GM10248 (cell line): ENCODE measurements at regions of chr7 and their contacts with region 1.

Region 1: GRCh38 chr7:100190048-100190711 is 12.5 kb downstream of the STAG3 start:
- DNase-seq: peak; percentile 39
- CTCF ChIP-seq: peak; percentile 48

Region 2: GRCh38 chr7:99827040-99827778 is 363.0 kb before region 1 on chr7:
- CTCF ChIA-PET with region 1: no interaction called
- POLR2A ChIA-PET with region 1: no interaction called
- DNase-seq: no peak
- CTCF ChIP-seq: no peak

Region 3: DNA sequence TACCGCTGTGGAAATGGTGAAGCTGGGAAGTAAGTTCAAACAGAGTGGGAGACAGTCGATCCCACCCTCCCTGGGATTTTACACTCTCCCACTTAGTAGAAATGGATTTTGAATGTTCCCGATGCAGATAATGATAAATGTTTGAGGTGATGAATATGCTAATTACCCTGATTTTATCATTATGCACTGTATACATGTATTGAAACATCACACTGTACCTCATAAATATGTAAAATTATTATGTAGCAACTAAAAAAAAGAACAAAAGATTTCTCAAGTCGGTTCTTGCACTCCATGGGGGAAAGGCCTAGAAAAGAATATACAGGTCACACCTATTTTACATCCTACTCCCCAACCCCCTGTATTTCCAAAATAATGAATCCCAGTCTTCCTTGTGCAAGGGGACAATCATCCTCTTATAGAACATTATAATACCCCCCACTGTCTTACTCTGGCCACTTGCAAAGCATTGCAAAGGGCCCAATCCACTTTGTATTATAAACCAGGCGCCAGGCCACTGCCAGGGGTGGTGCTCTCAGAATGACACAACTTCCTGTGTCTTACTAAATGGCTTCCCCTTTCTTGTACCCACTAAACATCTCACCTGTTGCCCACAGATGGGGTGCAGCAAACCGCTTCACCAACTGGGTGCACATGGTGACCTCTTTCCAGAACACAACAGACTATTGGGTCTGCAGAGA is 292.7 kb before region 1 on chr7:
- CTCF ChIA-PET with region 1: no interaction called
- POLR2A ChIA-PET with region 1: no interaction called
- DNase-seq: no peak
- CTCF ChIP-seq: no peak

Region 4: GRCh38 chr7:100177045-100178001 is 12.9 kb before region 1 on chr7 and contains the starts of genes GPC2 and STAG3:
- CTCF ChIA-PET with region 1: interaction called, 25 read pairs
- POLR2A ChIA-PET with region 1: no interaction called
- DNase-seq: peak; percentile 97
- CTCF ChIP-seq: no peak

Region 5: GRCh38 chr7:100200693-100201092 is 10.5 kb after region 1 on chr7:
- CTCF ChIA-PET with region 1: interaction called, 32 read pairs
- POLR2A ChIA-PET with region 1: no interaction called
- DNase-seq: no peak
- CTCF ChIP-seq: no peak

Region 6: DNA sequence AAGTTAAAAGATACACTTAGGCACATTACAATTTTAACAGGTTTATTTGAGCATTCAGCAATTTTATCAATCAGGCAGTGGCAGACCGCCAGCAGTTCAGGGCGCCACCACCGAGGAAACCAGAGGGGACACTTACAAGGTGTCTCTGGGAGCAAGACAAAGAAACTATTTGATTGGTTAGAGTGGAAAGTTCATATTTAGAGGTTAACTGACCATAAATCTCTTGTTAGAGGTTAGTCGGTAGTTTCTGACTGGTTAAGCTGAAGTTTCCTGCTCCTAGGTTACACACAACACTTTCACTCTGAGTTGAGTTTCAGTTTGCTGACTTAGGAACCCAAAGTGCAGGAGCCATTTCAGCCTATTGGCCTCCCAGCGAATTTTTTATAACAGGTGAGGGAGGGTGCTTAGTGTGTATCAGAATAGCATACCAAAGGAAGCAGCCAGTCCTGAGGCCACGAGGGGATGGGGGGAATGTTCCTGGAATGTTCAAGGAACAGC is 18.8 kb after region 1 on chr7:
- CTCF ChIA-PET with region 1: interaction called, 130 read pairs
- POLR2A ChIA-PET with region 1: no interaction called
- DNase-seq: peak; percentile 75
- CTCF ChIP-seq: no peak

Region 7: GRCh38 chr7:100215895-100216294 is 25.7 kb after region 1 on chr7:
- CTCF ChIA-PET with region 1: interaction called, 130 read pairs
- POLR2A ChIA-PET with region 1: no interaction called
- DNase-seq: no peak
- CTCF ChIP-seq: no peak

Region 8: GRCh38 chr7:100247152-100247757 is 57.1 kb after region 1 on chr7:
- CTCF ChIA-PET with region 1: no interaction called
- POLR2A ChIA-PET with region 1: no interaction called
- DNase-seq: no peak
- CTCF ChIP-seq: no peak

Region 9: GRCh38 chr7:100478966-100479665 is 288.9 kb after region 1 on chr7 and contains the start of gene TSC22D4:
- CTCF ChIA-PET with region 1: no interaction called
- POLR2A ChIA-PET with region 1: no interaction called
- DNase-seq: peak; percentile 91
- CTCF ChIP-seq: no peak